ENCODE measurements at regions of chr19 and their contacts with region 1.

Region 1: GRCh38 chr19:17125715-17126677 is 50.4 kb downstream of the MYO9B start:
- DNase-seq: peak; percentile 82 to 91
- ATAC-seq: peak; percentile 77 to 90 (median 81)
- H3K4me3 ChIP-seq: peak overlapping the region; percentile 27
- H3K4me3 Mint-ChIP-seq: peak overlapping the region; percentile 97
- H3K27ac ChIP-seq: peak overlapping the region; percentile 97
- H3K27ac Mint-ChIP-seq: peak overlapping the region; percentile 96 to 100
- H3K4me1 ChIP-seq: peaks cover 75% of the 10 kb centered on the region
- H3K4me1 Mint-ChIP-seq: peaks cover 41 to 76% of the 10 kb centered on the region in 2 donors
- H3K27me3 ChIP-seq: no peaks in the 10 kb centered on the region
- H3K27me3 Mint-ChIP-seq: no peaks in the 10 kb centered on the region
- CTCF ChIP-seq: no peak

Region 2: GRCh38 chr19:16371540-16371986 is 754.4 kb before region 1 on chr19:
- intact Hi-C with region 1: loop called (anchors 1 kb)
- DNase-seq: peak; percentile 90 to 96
- ATAC-seq: peak; percentile 48 to 78 (median 73)
- H3K4me3 ChIP-seq: peak overlapping the region; percentile 13
- H3K4me3 Mint-ChIP-seq: no peak overlapping the region
- H3K27ac ChIP-seq: peak overlapping the region; percentile 94
- H3K27ac Mint-ChIP-seq: no peak overlapping the region
- H3K4me1 ChIP-seq: peaks cover 99% of the 10 kb centered on the region
- H3K4me1 Mint-ChIP-seq: peaks cover 33 to 34% of the 10 kb centered on the region in 2 donors
- H3K27me3 ChIP-seq: no peaks in the 10 kb centered on the region
- H3K27me3 Mint-ChIP-seq: no peaks in the 10 kb centered on the region
- CTCF ChIP-seq: no peak

Region 3: GRCh38 chr19:17069218-17069617 is 56.8 kb before region 1 on chr19:
- intact Hi-C with region 1: loop called (anchors 1 kb)
- DNase-seq: no peak
- ATAC-seq: no peak
- H3K4me3 ChIP-seq: no peak overlapping the region
- H3K4me3 Mint-ChIP-seq: no peak overlapping the region
- H3K27ac ChIP-seq: no peak overlapping the region
- H3K27ac Mint-ChIP-seq: no peak overlapping the region
- H3K4me1 ChIP-seq: peaks cover 26% of the 10 kb centered on the region
- H3K4me1 Mint-ChIP-seq: peaks cover 25 to 47% of the 10 kb centered on the region in 2 donors
- H3K27me3 ChIP-seq: no peaks in the 10 kb centered on the region
- H3K27me3 Mint-ChIP-seq: peaks cover 6% of the 10 kb centered on the region in 2 donors
- CTCF ChIP-seq: no peak

Region 4: DNA sequence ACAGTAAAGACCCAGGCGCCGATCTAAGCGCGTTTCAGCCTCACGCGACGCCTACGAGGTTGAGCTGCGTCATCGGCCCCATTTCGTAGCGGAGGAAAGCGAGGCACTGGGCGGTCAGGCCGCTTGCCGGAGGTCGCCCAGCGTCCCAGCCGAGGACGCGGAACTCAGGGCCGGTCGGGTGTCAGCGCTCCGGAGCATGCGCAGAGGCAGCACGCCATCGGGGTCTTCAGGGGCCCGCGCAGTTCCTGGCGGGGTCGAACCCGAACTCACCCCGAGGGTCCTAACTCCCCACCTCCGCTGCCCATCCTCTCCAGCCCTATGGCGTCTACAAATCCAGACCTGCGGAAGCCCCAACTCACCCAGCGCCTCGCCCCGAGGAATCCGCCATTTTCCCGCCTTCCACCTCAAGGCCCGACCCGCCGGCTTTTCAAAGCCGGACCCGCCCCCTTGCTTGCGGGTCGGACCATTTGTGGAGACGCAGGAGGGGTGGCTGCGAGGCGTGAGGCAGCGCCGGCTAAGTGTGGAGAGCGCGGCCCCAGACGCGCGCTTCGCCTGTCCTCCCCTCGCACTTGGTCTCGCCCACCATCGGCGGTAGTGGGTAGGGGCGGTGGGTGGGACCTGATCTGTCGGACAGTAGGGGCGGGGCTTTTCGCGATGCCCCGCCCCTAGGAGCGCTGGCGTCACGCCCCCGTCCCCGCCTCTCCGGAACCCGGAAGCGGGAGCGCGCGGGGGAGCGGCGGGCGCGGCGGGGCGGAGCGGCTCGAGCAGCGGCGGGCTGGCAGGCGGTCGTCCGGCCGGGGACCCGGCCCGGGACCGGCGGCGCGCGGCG is 50.7 kb before region 1 on chr19 and contains the starts of genes HAUS8 and MYO9B:
- intact Hi-C with region 1: loop called (anchors 1 kb)
- DNase-seq: peak; percentile 99 to 100
- ATAC-seq: peak; percentile 89 to 98 (median 89)
- H3K4me3 ChIP-seq: peak within 1 kb of the TSS; percentile 83
- H3K4me3 Mint-ChIP-seq: peak within 1 kb of the TSS; percentile 98
- H3K27ac ChIP-seq: peak within 1 kb of the TSS; percentile 81
- H3K27ac Mint-ChIP-seq: peak within 1 kb of the TSS; percentile 92 to 96
- H3K4me1 ChIP-seq: peaks cover 57% of the 10 kb centered on the region
- H3K4me1 Mint-ChIP-seq: peaks cover 48 to 73% of the 10 kb centered on the region in 2 donors
- H3K27me3 ChIP-seq: no peaks in the 10 kb centered on the region
- H3K27me3 Mint-ChIP-seq: peaks cover 0 to 3% of the 10 kb centered on the region in 2 donors
- CTCF ChIP-seq: no peak
- total RNA-seq, gene HAUS8: 10.3 to 13.5 (median 10.4) TPM
- total RNA-seq, gene MYO9B: 321 to 378 (median 365) TPM

Region 5: DNA sequence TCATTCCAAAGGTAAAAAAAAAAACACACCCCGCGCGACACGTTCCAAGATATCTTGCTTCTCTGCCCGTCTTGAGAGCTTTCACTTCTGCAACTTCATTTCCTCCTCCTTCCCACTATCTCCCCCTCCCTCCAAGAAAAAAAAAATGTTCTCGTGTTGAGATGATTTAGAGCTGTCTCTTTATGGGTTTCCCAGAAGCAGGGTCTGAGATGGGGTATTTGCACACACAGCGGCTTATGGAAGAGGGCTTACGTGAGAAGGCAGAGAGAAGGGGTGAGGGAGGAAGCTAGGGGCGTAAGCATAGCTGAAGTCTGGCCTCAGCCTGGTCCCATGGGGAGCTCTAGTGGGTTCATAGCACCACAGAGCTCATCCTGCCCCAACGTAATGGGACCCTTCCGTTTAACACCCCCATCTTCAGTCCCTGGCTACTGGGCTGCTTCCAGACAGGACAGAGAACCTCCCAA is 57.9 kb after region 1 on chr19:
- intact Hi-C with region 1: loop called (anchors 1 kb)
- DNase-seq: peak in 1 of 2 donors; percentile 64
- ATAC-seq: peak; percentile 31 to 49 (median 45)
- H3K4me3 ChIP-seq: peak overlapping the region; percentile 2
- H3K4me3 Mint-ChIP-seq: peak overlapping the region; percentile 94
- H3K27ac ChIP-seq: peak overlapping the region; percentile 83
- H3K27ac Mint-ChIP-seq: peak overlapping the region; percentile 94 to 97
- H3K4me1 ChIP-seq: peaks cover 40% of the 10 kb centered on the region
- H3K4me1 Mint-ChIP-seq: peaks cover 26 to 30% of the 10 kb centered on the region in 2 donors
- H3K27me3 ChIP-seq: no peaks in the 10 kb centered on the region
- H3K27me3 Mint-ChIP-seq: no peaks in the 10 kb centered on the region
- CTCF ChIP-seq: no peak

Region 6: GRCh38 chr19:17226002-17226933 is 100.3 kb after region 1 on chr19 and contains the start of gene OCEL1:
- intact Hi-C with region 1: loop called (anchors 5 kb)
- DNase-seq: peak; percentile 97 to 99
- ATAC-seq: peak; percentile 89 to 97 (median 89)
- H3K4me3 ChIP-seq: peak within 1 kb of the TSS; percentile 78
- H3K4me3 Mint-ChIP-seq: peak within 1 kb of the TSS; percentile 98
- H3K27ac ChIP-seq: peak within 1 kb of the TSS; percentile 93
- H3K27ac Mint-ChIP-seq: peak within 1 kb of the TSS; percentile 96 to 99
- H3K4me1 ChIP-seq: peaks cover 21% of the 10 kb centered on the region
- H3K4me1 Mint-ChIP-seq: peaks cover 8 to 11% of the 10 kb centered on the region in 2 donors
- H3K27me3 ChIP-seq: no peaks in the 10 kb centered on the region
- H3K27me3 Mint-ChIP-seq: no peaks in the 10 kb centered on the region
- CTCF ChIP-seq: no peak
- total RNA-seq, gene OCEL1: 28.1 to 39.1 (median 37.0) TPM

Region 7: DNA sequence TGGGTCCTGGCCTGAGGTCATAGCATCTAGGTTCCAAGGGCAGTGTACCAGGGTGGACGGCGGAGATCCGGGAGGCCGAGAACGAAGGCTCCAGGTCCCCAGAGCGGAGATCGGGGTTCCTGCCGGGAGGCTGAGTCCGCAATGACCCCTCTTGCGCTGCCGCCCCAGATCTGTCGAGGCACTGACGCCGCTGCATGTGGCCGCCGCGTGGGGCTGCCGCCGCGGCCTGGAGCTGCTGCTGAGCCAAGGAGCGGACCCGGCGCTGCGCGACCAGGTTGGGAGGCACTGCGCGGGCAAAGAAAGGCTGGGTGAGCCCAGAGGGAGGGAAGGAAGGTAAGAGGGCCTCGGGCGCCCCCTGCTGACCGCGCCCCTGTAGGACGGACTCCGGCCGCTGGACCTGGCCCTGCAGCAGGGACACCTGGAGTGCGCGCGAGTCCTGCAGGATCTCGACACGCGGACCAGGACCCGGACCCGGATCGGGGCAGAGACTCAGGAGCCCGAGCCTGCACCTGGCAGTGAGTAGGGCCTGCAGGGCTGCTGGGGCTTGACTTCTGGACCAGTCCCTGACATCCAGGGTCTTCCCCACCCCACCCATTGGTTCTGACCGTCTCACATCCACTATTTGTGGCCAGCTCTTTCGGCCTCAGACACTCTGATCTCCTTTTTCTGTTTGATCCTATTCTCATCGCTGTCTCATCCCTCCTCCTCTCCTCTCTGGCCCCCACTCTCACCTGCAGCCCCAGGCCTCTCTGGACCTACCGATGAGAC is 156.7 kb after region 1 on chr19:
- intact Hi-C with region 1: no loop called
- DNase-seq: peak; percentile 76 to 87
- ATAC-seq: peak; percentile 92 to 98 (median 96)
- H3K4me3 ChIP-seq: peak overlapping the region; percentile 31
- H3K4me3 Mint-ChIP-seq: peak overlapping the region; percentile 74
- H3K27ac ChIP-seq: no peak overlapping the region
- H3K27ac Mint-ChIP-seq: no peak overlapping the region
- H3K4me1 ChIP-seq: peaks cover 19% of the 10 kb centered on the region
- H3K4me1 Mint-ChIP-seq: peaks cover 0 to 14% of the 10 kb centered on the region in 2 donors
- H3K27me3 ChIP-seq: peaks cover 12% of the 10 kb centered on the region
- H3K27me3 Mint-ChIP-seq: peaks cover 0 to 22% of the 10 kb centered on the region in 2 donors
- CTCF ChIP-seq: peak; percentile 86